Activated CD4-positive, alpha-beta T cell treated with anti-CD3 and anti-CD28 coated beads, Interleukin-2, amount 10 ng/mL, durations not matched to agents 24 days and 14 days (primary cell): ENCODE measurements at regions of chr7 and their contacts with region 1.

Region 1: GRCh38 chr7:129825496-129826267 is 127.1 kb downstream of the UBE2H start:
- DNase-seq: peak; percentile 97
- H3K4me3 Mint-ChIP-seq: peak overlapping the region; percentile 94
- H3K27ac Mint-ChIP-seq: peak overlapping the region; percentile 85
- H3K4me1 Mint-ChIP-seq: peaks cover 14% of the 10 kb centered on the region
- H3K27me3 Mint-ChIP-seq: no peaks in the 10 kb centered on the region

Region 2: DNA sequence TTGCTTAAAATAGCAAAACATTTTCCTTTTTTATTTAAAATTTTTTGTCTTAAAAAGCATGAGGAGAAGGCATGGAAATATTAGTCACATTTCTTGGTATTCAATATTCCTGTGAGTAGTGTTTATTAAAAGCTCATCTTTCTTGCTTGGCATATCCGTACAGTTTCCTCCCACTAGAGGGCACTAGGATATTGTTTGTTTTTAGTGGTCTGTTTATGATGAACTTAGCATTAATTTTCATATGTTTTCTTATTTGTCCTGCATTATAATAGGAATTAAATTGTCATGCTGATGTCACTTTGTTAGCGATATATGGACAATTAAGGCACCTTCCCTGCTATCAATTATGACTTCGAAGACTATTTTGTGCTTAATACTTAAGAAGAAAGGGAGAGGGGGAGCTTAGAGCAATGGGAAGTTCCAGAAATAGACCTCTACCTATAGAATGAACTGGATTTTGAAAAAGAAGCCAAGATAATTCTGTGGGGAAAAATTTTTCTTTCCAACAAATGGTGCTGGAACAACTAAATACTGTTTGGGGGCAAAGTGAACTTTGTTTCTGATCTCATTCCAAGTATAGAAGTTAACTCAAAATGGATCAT is 482.5 kb before region 1 on chr7:
- intact Hi-C with region 1: loop called (anchors 1 kb)
- DNase-seq: peak; percentile 76
- H3K4me3 Mint-ChIP-seq: no peak overlapping the region
- H3K27ac Mint-ChIP-seq: no peak overlapping the region
- H3K4me1 Mint-ChIP-seq: peaks cover 37% of the 10 kb centered on the region
- H3K27me3 Mint-ChIP-seq: no peaks in the 10 kb centered on the region

Region 3: GRCh38 chr7:129468087-129468486 is 357.6 kb before region 1 on chr7:
- intact Hi-C with region 1: loop called (anchors 10 kb)
- DNase-seq: no peak
- H3K4me3 Mint-ChIP-seq: no peak overlapping the region
- H3K27ac Mint-ChIP-seq: no peak overlapping the region
- H3K4me1 Mint-ChIP-seq: peaks cover 15% of the 10 kb centered on the region
- H3K27me3 Mint-ChIP-seq: no peaks in the 10 kb centered on the region

Region 4: DNA sequence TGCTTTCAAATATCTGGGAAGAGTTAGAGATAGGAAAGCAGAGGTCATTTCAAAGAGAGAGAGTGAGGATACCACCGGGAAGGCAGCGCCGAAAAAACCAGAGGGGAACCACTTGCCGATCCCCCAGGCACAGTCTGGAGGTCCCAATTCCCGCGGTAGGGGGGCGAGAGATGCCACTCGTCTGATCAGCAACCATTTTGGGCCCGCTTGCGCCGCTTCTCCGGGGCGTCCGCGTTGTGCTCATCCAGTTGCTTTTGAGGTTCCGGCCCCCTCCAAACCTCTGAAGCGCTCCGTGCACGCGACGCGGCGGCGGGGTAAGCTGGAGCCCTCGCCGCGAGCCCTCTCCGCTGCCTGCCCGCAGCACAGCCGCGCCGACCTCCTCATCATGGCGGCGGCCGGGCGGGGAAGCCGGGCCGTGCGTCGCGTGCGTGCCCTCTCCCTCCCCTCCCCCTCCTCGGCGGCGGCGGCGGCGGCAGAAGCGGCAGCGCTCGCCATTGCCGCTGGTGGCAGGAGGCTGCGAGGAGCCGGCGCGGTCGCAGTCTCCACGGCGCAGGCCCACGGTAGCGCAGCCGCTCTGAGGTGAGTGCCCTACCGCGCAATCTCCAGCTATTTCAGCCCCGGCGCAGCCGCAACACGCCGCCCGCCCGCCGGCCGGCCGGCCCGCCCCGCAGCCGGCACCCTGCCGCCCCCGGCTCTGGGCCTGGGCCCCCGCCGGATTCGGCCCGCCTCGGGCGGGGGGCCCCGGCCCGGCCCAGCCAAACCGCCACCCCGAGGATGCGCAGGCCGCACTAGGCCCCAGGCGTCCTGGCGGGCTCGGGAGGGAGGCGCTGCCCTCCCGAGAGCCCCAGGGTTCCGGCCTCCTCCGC is 214.2 kb before region 1 on chr7 and contains the start of gene NRF1:
- intact Hi-C with region 1: loop called (anchors 2 kb)
- DNase-seq: peak; percentile 98
- H3K4me3 Mint-ChIP-seq: peak within 1 kb of the TSS; percentile 93
- H3K27ac Mint-ChIP-seq: peak within 1 kb of the TSS; percentile 95
- H3K4me1 Mint-ChIP-seq: peaks cover 46% of the 10 kb centered on the region
- H3K27me3 Mint-ChIP-seq: no peaks in the 10 kb centered on the region
- total RNA-seq, gene NRF1: 22.3 and 23.2 TPM in 2 replicates

Region 5: GRCh38 chr7:129626896-129627295 is 198.8 kb before region 1 on chr7:
- intact Hi-C with region 1: no loop called
- DNase-seq: no peak
- H3K4me3 Mint-ChIP-seq: no peak overlapping the region
- H3K27ac Mint-ChIP-seq: no peak overlapping the region
- H3K4me1 Mint-ChIP-seq: peaks cover 14% of the 10 kb centered on the region
- H3K27me3 Mint-ChIP-seq: no peaks in the 10 kb centered on the region

Region 6: DNA sequence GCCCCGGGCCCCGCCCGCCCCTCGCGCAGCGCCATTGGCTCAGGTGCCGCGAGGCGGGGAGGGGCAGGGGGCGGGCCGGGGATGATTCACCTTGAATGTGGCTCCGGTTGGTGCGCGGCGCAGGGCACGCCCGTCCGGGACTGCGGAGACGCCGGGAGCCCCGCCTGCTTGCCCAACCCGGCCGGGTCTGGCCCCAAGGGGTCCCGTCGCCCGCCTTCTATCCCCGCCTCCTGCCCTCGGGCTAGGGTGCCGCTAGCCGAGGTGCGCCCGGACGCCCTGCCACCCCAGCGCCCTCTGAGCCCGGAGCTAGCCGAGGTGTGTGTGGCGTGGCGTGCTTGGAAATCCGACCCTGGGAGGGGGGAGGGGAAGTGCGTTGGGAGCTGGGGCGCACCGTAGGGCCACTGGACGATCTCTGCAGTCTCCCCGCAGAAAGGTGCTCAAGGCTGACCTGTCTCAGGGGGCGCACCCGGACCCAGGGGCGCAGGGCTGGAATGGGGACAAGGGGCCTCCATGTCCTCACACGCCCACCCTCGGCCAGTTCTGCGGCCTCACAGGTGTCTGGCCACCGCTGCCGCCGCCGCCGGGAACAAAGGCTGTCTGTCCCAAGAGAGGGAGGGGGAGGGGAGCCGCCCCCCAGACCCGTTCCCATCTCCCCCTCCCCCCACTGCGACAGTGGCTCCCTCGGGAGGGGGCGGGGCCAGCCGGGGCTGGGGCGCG is 45.3 kb before region 1 on chr7:
- intact Hi-C with region 1: loop called (anchors 5 kb)
- DNase-seq: peak; percentile 87
- H3K4me3 Mint-ChIP-seq: peak overlapping the region; percentile 64
- H3K27ac Mint-ChIP-seq: no peak overlapping the region
- H3K4me1 Mint-ChIP-seq: peaks cover 28% of the 10 kb centered on the region
- H3K27me3 Mint-ChIP-seq: peaks cover 60% of the 10 kb centered on the region

Region 7: DNA sequence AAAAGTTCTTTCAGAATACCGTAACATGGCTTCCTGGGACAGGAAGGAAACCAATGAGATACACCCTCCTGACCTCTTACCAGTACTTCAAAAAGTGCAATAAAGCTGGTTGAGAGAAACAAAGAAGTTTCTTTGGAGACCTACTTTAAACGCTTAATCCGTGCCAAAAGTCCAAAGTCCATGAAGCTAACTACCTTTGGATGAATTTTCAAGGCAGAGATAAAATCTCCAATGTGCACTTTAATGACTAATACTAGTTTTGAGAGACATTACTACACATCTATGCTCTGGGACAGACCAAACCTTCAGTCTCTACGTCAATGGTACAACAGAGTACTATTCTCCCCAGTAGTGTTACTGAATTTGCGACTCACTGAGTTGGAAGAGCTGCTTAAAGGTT is 81.0 kb after region 1 on chr7:
- intact Hi-C with region 1: no loop called
- DNase-seq: no peak
- H3K4me3 Mint-ChIP-seq: peak overlapping the region; percentile 37
- H3K27ac Mint-ChIP-seq: no peak overlapping the region
- H3K4me1 Mint-ChIP-seq: peaks cover 20% of the 10 kb centered on the region
- H3K27me3 Mint-ChIP-seq: no peaks in the 10 kb centered on the region

Region 8: GRCh38 chr7:130010689-130011412 is 185.2 kb after region 1 on chr7:
- intact Hi-C with region 1: loop called (anchors 1 kb)
- DNase-seq: peak; percentile 96
- H3K4me3 Mint-ChIP-seq: no peak overlapping the region
- H3K27ac Mint-ChIP-seq: peak overlapping the region; percentile 57
- H3K4me1 Mint-ChIP-seq: peaks cover 3% of the 10 kb centered on the region
- H3K27me3 Mint-ChIP-seq: no peaks in the 10 kb centered on the region